ENCODE measurements at regions of chr2 and their contacts with region 1.

Region 1: GRCh38 chr2:119759451-119760236 is at the start of gene PTPN4:
- DNase-seq: peak; percentile 98
- ATAC-seq: peak; percentile 93
- H3K4me3 Mint-ChIP-seq: peak within 1 kb of the TSS; percentile 72
- H3K27ac Mint-ChIP-seq: peak within 1 kb of the TSS; percentile 93
- H3K4me1 Mint-ChIP-seq: peaks cover 43% of the 10 kb centered on the region
- H3K27me3 Mint-ChIP-seq: no peaks in the 10 kb centered on the region
- total RNA-seq, gene PTPN4: 32.4 to 38.0 TPM

Region 2: DNA sequence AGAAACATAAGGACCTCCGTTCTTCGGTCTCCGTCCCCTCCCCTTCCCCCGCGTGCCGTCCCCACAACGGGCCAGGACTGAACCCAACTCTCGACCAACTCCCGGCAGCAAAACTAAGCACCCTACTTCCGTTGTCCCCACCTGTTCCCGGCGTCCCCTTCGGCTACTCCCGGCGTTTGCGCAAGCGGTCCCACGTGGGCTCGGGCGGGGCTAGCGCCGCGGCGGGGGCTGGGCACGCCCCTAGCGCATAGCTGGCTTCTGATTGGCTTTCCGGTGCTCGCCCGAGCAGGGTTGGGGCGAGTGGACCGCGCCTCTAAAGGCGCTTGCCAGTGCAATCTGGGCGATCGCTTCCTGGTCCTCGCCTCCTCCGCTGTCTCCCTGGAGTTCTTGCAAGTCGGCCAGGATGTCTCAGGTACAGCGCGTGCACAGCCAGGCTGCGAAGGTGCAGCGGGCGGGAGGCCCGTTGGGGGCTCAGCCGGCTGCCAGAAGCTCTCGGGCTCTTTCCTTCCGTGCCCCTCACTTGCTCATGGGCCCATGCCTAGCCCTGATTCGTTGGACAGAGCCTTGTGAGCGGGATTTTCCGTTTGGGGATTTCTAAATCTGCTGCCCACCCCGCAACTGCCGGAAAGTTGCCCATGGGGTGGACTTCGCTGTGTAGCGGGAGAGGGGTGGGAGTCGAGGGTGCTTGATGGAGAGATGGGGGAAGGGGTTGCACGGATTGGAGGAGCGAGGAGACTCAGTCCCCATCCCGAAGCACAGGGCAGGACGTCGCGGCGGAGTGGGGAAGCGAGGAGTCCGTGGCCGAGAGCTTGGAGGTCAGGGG is 392.8 kb before region 1 on chr2 and contains the starts of genes C2orf76 and DBI:
- CTCF ChIA-PET with region 1: no interaction called
- POLR2A ChIA-PET with region 1: no interaction called
- intact Hi-C with region 1: loop called (anchors 2 to 10 kb)
- DNase-seq: peak; percentile 96
- ATAC-seq: peak; percentile 95
- H3K4me3 Mint-ChIP-seq: peak within 1 kb of the TSS; percentile 92
- H3K27ac Mint-ChIP-seq: peak within 1 kb of the TSS; percentile 95
- H3K4me1 Mint-ChIP-seq: peaks cover 36% of the 10 kb centered on the region
- H3K27me3 Mint-ChIP-seq: no peaks in the 10 kb centered on the region
- total RNA-seq, gene C2orf76: 8.9 to 9.9 TPM
- total RNA-seq, gene DBI: 123 to 151 TPM

Region 3: GRCh38 chr2:119630121-119630520 is 129.5 kb before region 1 on chr2:
- CTCF ChIA-PET with region 1: no interaction called
- POLR2A ChIA-PET with region 1: no interaction called
- intact Hi-C with region 1: no loop called
- DNase-seq: no peak
- ATAC-seq: no peak
- H3K4me3 Mint-ChIP-seq: no peak overlapping the region
- H3K27ac Mint-ChIP-seq: no peak overlapping the region
- H3K4me1 Mint-ChIP-seq: no peaks in the 10 kb centered on the region
- H3K27me3 Mint-ChIP-seq: peaks cover 11% of the 10 kb centered on the region

Region 4: DNA sequence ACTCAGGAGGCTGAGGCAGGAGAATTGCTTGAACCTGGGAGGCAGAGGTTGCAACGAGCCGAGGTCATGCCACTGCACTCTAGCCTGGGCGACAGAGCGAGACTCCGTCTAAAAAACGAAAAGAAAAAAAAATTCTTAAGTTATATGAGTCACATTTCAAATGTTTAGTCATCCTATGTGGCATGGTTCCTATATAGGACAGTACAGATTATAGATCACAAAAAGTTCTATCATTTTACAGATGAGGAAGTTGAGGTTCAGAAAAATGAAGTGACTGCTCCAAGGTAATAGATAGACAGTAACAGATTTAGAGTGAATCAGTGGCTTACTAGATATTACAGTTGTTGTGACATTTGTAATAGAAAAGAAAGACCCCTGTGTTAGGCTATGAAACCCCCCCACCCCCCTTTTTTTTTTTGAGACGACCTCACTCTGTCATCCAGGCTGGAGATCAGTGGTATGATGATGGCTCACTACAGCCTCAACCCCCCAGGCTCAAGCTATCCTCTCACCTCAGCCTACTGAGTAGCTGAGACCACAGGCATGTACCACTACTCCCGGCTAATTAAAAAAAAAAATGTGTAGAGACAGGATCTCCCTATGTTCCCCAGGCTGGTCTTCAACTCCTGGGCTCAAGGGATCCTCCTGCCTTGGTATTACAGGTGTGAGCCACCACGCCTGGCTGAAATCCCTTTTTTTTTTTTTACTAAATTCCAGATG is 22.8 kb after region 1 on chr2:
- CTCF ChIA-PET with region 1: interaction called, 3 read pairs
- POLR2A ChIA-PET with region 1: no interaction called
- intact Hi-C with region 1: loop called in 1 of 2 experiments (anchors 2 kb)
- DNase-seq: no peak
- ATAC-seq: peak; percentile 75
- H3K4me3 Mint-ChIP-seq: no peak overlapping the region
- H3K27ac Mint-ChIP-seq: no peak overlapping the region
- H3K4me1 Mint-ChIP-seq: peaks cover 40% of the 10 kb centered on the region
- H3K27me3 Mint-ChIP-seq: no peaks in the 10 kb centered on the region

Region 5: DNA sequence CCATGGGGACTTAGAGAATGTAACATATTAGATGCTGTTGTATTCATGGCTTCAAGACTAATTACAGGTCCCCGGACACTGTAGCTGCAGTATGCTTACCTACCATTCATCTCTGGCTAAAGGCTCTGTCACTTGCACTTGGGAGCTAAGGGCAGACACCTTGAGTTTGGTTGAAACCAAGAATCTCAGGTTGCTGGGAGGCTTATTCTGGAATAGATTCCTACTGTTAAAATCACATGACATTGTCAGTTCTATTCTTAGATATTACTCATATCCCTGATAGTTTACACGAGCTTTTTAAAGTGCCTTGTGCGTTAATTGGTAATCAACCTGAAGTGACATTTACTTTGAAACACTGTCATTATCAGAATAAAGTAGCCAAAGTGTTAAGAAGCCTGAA is 180.3 kb after region 1 on chr2:
- CTCF ChIA-PET with region 1: no interaction called
- POLR2A ChIA-PET with region 1: no interaction called
- intact Hi-C with region 1: loop called in 1 of 2 experiments (anchors 10 kb)
- DNase-seq: no peak
- ATAC-seq: no peak
- H3K4me3 Mint-ChIP-seq: no peak overlapping the region
- H3K27ac Mint-ChIP-seq: no peak overlapping the region
- H3K4me1 Mint-ChIP-seq: peaks cover 12% of the 10 kb centered on the region
- H3K27me3 Mint-ChIP-seq: no peaks in the 10 kb centered on the region

Region 6: DNA sequence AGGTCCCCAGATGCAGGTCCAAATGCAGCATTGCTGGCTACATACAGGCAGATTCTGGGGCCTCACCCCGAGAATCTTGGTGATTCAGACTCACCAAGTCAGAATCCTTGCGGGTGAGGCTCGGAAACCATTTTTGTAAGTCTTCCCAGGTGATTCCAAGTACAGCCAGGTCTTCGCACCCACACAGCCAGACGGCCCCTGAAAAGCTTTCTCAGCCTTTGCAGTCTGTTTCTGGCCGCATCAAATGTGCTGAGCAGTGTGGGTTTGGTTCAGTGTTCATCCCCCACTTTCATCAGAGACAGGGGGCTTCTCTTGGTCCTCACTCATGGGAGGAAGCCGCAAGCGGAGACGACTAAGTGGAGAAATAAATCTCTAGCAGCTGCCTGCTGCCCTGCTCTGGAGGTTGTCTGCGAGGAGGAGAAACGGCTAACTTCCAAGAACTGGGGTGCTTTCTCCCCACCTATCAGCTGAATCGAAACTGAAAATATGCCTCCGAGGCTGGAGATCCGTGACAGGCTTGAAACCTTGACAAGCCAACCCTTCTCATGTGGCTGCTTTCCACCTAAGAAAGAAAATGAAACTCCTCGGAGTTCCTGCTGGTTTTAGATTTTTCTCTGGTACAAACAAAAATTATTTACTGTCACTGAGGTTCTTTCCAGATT is 472.5 kb after region 1 on chr2:
- CTCF ChIA-PET with region 1: no interaction called
- POLR2A ChIA-PET with region 1: interaction called, 3 read pairs
- intact Hi-C with region 1: loop called (anchors 1 to 5 kb)
- DNase-seq: peak; percentile 83
- ATAC-seq: peak; percentile 88
- H3K4me3 Mint-ChIP-seq: peak overlapping the region; percentile 80
- H3K27ac Mint-ChIP-seq: peak overlapping the region; percentile 95
- H3K4me1 Mint-ChIP-seq: peaks cover 52% of the 10 kb centered on the region
- H3K27me3 Mint-ChIP-seq: no peaks in the 10 kb centered on the region

Region 7: DNA sequence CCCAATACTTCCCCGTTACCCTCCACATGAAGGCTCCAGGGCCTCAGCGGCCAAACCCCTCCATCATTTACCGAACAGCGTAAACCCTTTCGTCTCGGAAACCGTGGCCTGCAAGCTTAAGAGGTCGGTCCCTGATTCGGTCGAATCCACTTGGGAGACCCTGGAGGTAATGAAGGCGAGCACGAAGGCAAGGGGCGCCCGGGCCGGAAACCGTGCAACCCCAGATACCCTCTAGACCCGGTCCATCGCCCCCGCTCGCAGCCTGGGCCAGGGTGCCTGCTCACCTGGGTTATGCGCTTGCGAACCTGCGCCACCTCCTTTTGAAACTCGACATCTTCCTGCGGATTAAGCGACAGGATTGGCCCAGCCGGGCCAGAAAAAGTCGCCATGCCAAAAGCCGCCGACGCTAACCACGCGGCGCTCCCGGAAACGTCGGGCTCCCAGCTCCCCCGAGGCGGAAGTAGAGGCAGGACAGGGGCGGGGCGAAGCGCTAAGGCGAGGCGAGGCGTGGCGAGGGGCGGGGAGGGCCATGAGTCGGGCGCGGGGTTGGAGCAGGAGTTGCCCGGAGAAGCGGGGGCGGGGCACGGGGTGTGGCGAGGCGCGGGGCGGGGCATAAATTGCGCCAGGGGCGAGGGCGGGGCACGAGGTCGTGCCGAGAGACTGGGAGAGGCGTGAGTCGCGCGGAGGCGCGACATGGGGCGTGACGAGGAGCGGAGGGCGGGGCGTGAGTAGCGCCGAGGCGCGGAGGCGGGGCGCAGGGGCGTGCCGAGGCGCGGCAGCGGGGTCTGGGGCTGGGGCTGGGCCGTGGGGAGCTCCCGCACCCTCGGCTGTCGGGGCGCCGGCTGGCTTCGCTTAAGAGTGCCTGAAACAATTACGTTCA is 1977.1 kb after region 1 on chr2 and contains the start of gene NIFK:
- CTCF ChIA-PET with region 1: no interaction called
- POLR2A ChIA-PET with region 1: no interaction called
- intact Hi-C with region 1: loop called in 1 of 2 experiments (anchors 5 kb)
- DNase-seq: peak; percentile 100
- ATAC-seq: peak; percentile 91
- H3K4me3 Mint-ChIP-seq: peak within 1 kb of the TSS; percentile 83
- H3K27ac Mint-ChIP-seq: peak within 1 kb of the TSS; percentile 97
- H3K4me1 Mint-ChIP-seq: peaks cover 40% of the 10 kb centered on the region
- H3K27me3 Mint-ChIP-seq: no peaks in the 10 kb centered on the region
- total RNA-seq, gene NIFK: 148 to 213 TPM

Measured in activated CD4-positive, alpha-beta T cell treated with anti-CD3 and anti-CD28 coated beads for 36 hours (primary cell).